SK-N-SH (cell line): ENCODE measurements at regions of chr11 and their contacts with region 1.

Region 1: DNA sequence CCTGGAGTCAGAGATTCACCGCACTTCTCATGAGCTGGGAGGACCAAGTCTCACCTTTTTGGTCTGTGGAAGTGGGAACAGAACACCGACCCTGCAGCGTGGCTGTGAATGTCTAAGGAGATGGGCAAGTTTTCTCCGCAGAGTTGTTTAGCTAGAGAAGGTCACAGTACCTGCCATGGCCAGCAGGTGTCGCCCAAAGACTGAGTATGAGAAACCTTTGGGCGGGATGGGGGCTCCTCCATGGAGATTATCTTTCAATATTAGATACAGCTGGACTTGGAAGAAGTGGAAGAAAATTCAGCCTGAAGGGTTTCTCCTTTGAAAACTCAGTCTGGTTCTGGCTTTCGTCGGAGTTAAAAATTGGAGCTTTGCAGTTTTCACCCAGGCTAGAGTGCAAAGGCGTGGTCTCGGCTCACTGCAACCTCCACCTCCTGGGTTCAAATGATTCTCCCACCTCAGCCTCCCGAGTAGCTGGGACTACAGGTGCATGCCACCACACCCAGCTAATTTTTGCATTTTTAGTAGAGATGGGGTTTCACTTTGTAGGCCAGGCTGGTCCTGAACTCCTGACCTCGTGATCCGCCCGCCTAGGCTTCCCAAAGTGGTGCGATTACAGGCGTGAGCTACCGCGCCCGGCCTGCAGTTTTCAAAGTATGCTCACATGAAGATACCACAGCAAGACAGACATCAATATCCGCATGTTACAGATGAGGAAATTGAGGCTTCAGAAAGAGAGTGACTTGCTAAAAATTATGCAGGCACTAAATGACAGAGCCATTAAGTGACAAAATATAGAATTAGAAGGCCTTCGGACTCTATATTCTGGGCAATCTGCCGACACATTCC is 10.7 kb upstream of the DSCAML1 start:
- DNase-seq: peak; percentile 79
- H3K4me3 ChIP-seq: no peak overlapping the region; a peak in 1 of 4 replicates
- H3K27ac ChIP-seq: no peak overlapping the region
- H3K4me1 ChIP-seq: peaks cover 0 to 5% of the 10 kb centered on the region in 2 experiments; a peak in 1 of 4 replicates
- H3K27me3 ChIP-seq: peaks cover 12% of the 10 kb centered on the region; the same call in 1 of the 2 replicates
- CTCF ChIP-seq: peak; percentile 92
- EP300 ChIP-seq: no peak
- RAD21 ChIP-seq: peak; percentile 84

Region 2: DNA sequence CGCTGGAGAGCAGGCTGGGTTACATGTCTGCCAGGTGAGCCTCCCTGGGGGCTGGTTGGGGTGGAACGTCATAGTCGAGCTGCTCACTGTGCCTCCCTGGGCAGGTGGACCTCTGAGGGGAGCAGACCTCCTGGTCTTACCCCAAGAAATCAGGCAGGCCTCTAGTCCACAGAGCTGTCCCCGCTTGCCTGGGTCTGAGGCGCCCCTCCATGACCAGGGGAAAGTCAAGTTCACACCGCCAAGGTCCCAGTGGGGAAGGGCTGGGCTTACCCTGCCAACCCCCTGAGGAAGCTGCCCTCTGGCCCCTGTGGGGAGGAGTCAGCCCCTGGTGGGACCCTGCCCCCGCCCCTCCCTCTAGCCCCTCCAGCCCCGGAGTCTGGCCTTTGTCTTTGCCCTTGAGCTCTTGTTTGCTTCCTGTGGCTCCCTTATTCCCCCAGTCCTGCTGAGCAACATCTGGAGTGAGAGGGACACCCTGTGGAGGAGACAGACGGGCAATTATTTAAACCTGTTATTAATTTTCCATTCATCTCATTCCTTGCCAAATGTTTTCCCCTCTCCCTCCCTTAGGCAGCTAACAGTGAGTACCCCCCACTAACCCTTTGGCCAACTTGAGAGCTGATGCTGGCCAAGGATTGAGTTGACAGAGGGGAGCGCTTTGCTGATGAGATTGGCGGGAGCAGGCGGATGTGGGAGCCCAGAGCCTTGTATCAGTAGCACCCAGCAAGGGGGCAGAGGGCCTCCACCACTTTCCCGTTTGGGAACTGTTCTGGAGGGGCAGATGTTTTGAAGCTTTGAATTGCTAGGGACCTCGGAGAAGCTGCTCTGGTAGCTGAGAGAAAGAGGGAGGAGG is 396.6 kb before region 1 on chr11:
- CTCF ChIA-PET with region 1: interaction called, 31 read pairs
- POLR2A ChIA-PET with region 1: no interaction called
- DNase-seq: peak; percentile 77
- H3K4me3 ChIP-seq: no peak overlapping the region
- H3K27ac ChIP-seq: peak overlapping the region in 1 of 2 experiments; percentile 24; a peak in 2 of 4 replicates
- H3K4me1 ChIP-seq: peaks cover 0 to 12% of the 10 kb centered on the region in 2 experiments; a peak in 1 of 4 replicates
- H3K27me3 ChIP-seq: no peaks in the 10 kb centered on the region
- CTCF ChIP-seq: no peak
- EP300 ChIP-seq: no peak
- RAD21 ChIP-seq: peak; percentile 56

Region 3: DNA sequence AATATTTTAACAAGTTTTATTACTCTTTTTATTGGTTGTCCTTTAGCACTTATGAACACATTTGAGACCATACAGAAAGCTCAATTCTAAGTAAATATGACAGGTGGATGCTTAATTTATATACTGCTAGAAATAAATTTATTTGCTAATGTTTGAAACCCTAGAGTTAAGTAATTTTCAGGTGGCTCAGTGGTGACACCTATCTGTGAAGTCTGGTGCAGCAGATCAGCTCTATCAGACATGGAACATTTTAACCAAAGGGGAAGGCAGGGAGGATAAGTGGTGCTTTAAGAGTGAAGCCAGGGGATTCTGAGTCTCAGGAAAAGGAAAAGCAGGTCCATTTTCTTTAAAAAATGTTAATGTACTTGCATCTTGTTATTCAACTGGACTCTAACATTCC is 186.5 kb before region 1 on chr11:
- CTCF ChIA-PET with region 1: interaction called, 11 read pairs
- POLR2A ChIA-PET with region 1: no interaction called
- DNase-seq: no peak
- H3K4me3 ChIP-seq: no peak overlapping the region
- H3K27ac ChIP-seq: no peak overlapping the region
- H3K4me1 ChIP-seq: peaks cover 0 to 8% of the 10 kb centered on the region in 2 experiments; a peak in 1 of 4 replicates
- H3K27me3 ChIP-seq: 0 out of 2 replicates have a peak, but pooled peaks cover 4% of the 10 kb centered on the region
- CTCF ChIP-seq: peak; percentile 57
- EP300 ChIP-seq: no peak
- RAD21 ChIP-seq: peak; percentile 18; the same call in 1 of the 2 replicates

Region 4: GRCh38 chr11:117771197-117771596 is 36.5 kb before region 1 on chr11:
- CTCF ChIA-PET with region 1: interaction called, 88 read pairs
- POLR2A ChIA-PET with region 1: interaction called, 3 read pairs
- DNase-seq: no peak
- H3K4me3 ChIP-seq: no peak overlapping the region
- H3K27ac ChIP-seq: peak overlapping the region in 1 of 2 experiments; percentile 95; a peak in 1 of 4 replicates
- H3K4me1 ChIP-seq: peaks cover 0 to 31% of the 10 kb centered on the region in 2 experiments; a peak in 2 of 4 replicates
- H3K27me3 ChIP-seq: no peaks in the 10 kb centered on the region; the same call in 1 of the 2 replicates
- CTCF ChIP-seq: no peak
- EP300 ChIP-seq: no peak
- RAD21 ChIP-seq: no peak

Region 5: DNA sequence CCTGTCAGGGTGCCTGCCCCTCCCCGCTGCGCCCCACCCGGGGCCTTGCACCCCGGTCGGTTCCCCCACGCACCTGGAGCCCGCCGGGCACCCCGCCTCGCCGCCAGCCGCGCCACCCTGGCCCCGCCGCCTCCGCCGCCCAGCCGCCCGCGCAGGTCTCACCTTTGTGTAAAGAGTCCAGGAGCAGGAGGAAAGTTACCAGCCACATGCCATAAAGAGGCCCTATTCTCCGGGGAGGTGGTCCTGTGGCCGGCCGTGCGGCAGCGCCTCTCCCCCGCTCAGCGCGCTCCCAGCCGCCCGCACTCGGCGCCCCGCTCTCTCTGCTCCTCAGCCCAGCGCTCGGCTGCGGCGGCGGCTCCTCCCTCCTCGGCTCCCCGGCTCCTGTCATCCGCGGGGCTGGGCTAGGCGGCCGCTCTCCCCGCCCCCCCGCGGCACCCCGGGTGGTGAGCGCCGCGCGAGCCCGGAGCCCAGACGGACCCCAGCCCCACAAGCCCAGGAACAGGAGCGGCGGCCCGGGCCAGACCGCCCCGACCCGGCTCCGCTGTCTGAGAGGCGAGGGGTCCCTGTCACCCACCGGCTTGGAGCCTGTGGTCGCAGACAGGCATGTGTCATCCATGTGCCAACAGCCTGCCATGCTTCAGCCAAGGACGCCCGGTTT is 10.7 kb before region 1 on chr11 and contains the start of gene DSCAML1:
- CTCF ChIA-PET with region 1: interaction called, 48 read pairs
- POLR2A ChIA-PET with region 1: no interaction called
- DNase-seq: peak; percentile 87
- H3K4me3 ChIP-seq: peak within 1 kb of the TSS in 1 of 2 experiments; percentile 34; a peak in 2 of 4 replicates
- H3K27ac ChIP-seq: no peak within 1 kb of the TSS
- H3K4me1 ChIP-seq: peaks cover 0 to 14% of the 10 kb centered on the region in 2 experiments; a peak in 1 of 4 replicates
- H3K27me3 ChIP-seq: peaks cover 35% of the 10 kb centered on the region
- CTCF ChIP-seq: no peak
- EP300 ChIP-seq: no peak
- RAD21 ChIP-seq: no peak
- polyA plus RNA-seq, gene DSCAML1: not detected in 2 replicates

Region 6: DNA sequence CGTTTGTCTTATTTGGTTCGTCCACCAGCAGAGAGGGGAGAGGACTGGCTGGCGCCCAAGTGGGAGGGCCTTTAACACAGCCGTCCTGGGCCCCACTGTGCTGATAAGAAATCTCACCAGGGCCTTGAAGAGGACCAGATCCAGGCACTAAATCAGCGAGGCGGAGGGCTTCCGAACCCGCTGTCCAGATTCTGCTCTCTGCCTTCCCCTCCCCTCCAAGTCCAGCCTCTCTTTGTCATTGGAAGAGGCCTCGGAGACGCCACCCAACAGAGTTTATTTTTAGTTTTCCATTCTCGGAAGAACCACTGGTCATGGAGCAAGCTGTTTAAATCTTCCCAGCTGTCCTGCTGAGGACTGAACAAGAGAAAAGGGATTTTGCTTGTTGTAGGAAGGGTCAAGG is 78.1 kb after region 1 on chr11:
- CTCF ChIA-PET with region 1: no interaction called
- POLR2A ChIA-PET with region 1: no interaction called
- DNase-seq: no peak
- H3K4me3 ChIP-seq: no peak overlapping the region
- H3K27ac ChIP-seq: no peak overlapping the region
- H3K4me1 ChIP-seq: peaks cover 0 to 23% of the 10 kb centered on the region in 2 experiments; a peak in 1 of 4 replicates
- H3K27me3 ChIP-seq: no peaks in the 10 kb centered on the region
- CTCF ChIP-seq: no peak
- EP300 ChIP-seq: no peak
- RAD21 ChIP-seq: no peak